Naive thymus-derived CD4-positive, alpha-beta T cell (primary cell): ENCODE measurements at regions of chr4 and their contacts with region 1.

Region 1: DNA sequence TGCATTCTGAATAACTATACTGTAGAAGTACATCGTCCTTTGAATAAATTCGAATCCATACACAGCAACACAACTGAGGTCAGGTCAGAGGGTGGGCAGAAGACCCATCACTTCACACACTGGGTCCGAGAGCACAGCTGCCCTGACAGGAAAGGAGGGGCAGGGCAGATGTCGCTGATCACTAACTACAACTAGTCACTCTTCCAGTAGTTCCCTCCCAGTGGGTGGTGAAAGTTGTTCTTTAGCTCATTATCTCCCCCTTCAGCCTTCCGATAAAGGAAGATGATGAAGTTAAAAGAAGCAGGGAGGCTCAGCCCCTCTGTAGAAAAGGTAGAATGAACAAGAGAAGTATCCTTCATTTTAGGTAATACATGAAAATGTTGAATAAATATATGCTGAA is 278.9 kb downstream of the INPP4B start:
- DNase-seq: peak; percentile 7 to 75 (median 67)
- ATAC-seq: peak; percentile 82
- H3K4me3 ChIP-seq: peak overlapping the region; percentile 59
- H3K4me3 Mint-ChIP-seq: peak overlapping the region; percentile 82 to 98 (median 93)
- H3K27ac ChIP-seq: peak overlapping the region; percentile 84
- H3K27ac Mint-ChIP-seq: peak overlapping the region; percentile 92 to 99 (median 96)
- H3K4me1 ChIP-seq: peaks cover 10 to 45% of the 10 kb centered on the region in 2 donors
- H3K4me1 Mint-ChIP-seq: peaks cover 5 to 80% (median 66%) of the 10 kb centered on the region in 7 donors
- H3K27me3 ChIP-seq: no peaks in the 10 kb centered on the region
- H3K27me3 Mint-ChIP-seq: no peaks in the 10 kb centered on the region

Region 2: DNA sequence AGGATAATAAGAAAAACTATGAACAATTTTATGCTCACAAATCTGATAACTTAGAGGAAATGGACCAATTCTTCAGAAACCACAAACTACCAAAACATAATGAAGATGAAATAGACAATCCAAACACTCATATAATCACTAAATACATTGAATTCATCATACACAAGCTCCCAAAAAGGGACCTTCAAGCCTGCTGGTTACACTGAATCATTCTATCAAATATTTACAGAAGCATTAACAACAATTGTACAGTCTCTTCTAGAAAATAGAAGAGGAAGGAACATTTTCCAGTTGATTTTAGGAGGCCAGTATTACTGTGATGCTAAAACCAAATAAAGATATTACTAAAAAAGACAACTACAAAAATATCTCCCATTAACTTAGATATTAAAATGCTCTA is 842.6 kb before region 1 on chr4:
- CTCF ChIA-PET with region 1: no interaction called
- POLR2A ChIA-PET with region 1: no interaction called
- intact Hi-C with region 1: no loop called
- DNase-seq: no peak
- ATAC-seq: no peak
- H3K4me3 ChIP-seq: no peak overlapping the region
- H3K4me3 Mint-ChIP-seq: no peak overlapping the region
- H3K27ac ChIP-seq: no peak overlapping the region
- H3K27ac Mint-ChIP-seq: no peak overlapping the region
- H3K4me1 ChIP-seq: no peaks in the 10 kb centered on the region
- H3K4me1 Mint-ChIP-seq: peaks cover 0 to 3% (median 0%) of the 10 kb centered on the region in 7 donors
- H3K27me3 ChIP-seq: no peaks in the 10 kb centered on the region
- H3K27me3 Mint-ChIP-seq: no peaks in the 10 kb centered on the region

Region 3: DNA sequence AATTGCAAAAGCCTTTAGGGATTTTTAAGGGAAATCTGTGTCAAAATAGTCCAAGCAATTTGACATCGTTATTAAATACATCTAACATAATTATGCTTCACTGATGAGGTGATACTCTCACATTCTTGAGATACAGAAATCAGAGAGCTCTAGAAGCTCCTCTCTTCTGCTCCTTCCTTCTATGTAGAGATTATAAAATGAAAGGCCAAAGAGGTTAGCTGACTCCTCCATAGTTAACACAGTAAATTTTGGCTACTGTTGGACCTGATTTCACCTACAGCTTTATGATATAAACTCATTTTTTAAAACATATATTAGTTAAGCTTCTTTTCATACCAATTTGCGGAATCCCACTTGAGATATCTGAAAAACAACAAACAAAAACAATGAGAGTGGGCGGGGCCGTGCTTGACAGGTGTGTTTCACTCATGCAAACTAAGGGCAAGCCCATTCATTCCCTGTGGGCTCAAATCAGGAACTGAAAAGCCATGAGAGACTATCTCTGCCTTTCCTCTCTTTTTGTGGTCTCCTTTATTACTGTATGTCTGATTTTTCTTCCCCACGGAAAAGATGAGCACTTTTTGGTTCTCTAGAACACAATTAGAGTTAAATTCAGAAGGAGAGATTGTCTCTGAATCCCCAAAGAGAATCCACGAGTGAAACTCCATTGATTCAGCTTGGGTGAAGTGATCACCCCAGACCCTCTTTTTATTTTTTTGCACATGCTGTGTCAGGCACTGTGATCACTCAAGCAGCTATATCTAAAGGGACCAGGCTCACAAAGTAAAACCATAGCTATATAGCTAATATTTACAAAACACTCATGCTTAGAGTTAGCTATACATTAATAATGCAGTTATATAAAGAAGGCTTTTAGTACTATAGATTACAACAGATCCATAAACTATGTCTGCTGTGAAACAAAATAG is 364.5 kb before region 1 on chr4:
- CTCF ChIA-PET with region 1: no interaction called
- POLR2A ChIA-PET with region 1: no interaction called
- intact Hi-C with region 1: loop called in 1 of 2 experiments (anchors 5 kb)
- DNase-seq: no peak
- ATAC-seq: no peak
- H3K4me3 ChIP-seq: no peak overlapping the region
- H3K4me3 Mint-ChIP-seq: no peak overlapping the region
- H3K27ac ChIP-seq: no peak overlapping the region
- H3K27ac Mint-ChIP-seq: peak overlapping the region in 2 of 9 donors; percentile 27 to 61
- H3K4me1 ChIP-seq: no peaks in the 10 kb centered on the region
- H3K4me1 Mint-ChIP-seq: peaks cover 0 to 48% (median 32%) of the 10 kb centered on the region in 7 donors
- H3K27me3 ChIP-seq: no peaks in the 10 kb centered on the region
- H3K27me3 Mint-ChIP-seq: no peaks in the 10 kb centered on the region

Region 4: DNA sequence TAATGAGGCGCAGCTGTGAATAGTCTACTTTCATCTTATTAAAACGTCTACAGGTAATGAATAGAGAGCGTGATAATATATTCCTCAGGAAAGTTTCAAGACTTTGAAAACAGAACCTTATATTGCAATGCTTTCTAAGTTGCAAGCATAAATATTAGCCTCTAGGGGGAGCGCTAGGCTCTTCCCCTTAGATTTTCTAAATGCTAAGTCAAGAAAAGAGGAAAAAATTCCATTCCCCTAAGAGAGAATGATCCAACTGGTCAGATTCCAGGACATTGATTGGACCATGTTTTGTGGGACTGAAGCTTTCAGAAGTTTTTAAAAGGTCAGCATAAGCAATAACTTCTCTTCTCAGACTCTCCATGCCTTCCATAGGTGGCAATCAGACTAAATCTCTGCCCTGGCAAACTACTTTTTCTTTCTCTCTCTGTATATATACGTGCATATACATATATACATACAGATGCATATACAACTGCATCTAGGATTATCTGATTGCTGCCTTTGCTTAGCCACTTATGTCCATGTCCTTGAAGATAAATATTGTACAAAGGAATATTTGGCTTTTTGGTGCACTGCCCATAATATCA is 214.0 kb before region 1 on chr4:
- CTCF ChIA-PET with region 1: interaction called, 22 read pairs
- POLR2A ChIA-PET with region 1: interaction called, 50 read pairs
- intact Hi-C with region 1: loop called (anchors 1 kb)
- DNase-seq: peak in 6 of 9 donors; percentile 21 to 50 (median 46)
- ATAC-seq: peak; percentile 61
- H3K4me3 ChIP-seq: no peak overlapping the region
- H3K4me3 Mint-ChIP-seq: peak overlapping the region in 9 of 10 donors; percentile 38 to 79 (median 70)
- H3K27ac ChIP-seq: peak overlapping the region; percentile 67
- H3K27ac Mint-ChIP-seq: peak overlapping the region; percentile 68 to 95 (median 92)
- H3K4me1 ChIP-seq: peaks cover 69 to 84% of the 10 kb centered on the region in 2 donors
- H3K4me1 Mint-ChIP-seq: peaks cover 58 to 100% (median 97%) of the 10 kb centered on the region in 7 donors
- H3K27me3 ChIP-seq: no peaks in the 10 kb centered on the region
- H3K27me3 Mint-ChIP-seq: no peaks in the 10 kb centered on the region

Region 5: DNA sequence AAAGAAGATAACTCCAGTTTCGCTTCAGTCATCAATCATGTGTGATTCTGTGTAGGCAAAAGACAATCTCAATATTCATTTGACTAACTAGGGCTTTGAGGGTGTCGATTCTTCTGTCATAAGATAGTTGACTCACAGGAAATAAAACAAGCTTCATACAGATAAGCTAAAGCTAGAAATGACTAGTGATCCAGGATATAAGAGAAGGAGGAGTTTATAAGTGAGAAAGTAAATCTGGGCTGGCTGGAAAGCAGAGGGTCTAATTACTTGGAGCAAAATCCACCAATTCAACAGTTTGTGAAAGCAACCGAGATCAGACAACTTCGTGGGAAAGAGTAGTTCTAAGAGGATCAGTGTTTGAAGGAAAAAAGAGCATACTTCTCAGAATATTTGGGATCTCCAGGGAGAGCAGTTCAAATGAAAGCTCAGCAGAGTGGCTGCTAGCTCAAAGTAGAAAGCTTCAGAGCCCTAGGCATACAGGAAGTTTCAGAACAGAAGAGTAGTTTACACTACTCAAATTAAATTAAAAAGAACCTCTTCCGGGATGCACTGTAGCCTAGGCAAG is 150.4 kb before region 1 on chr4:
- CTCF ChIA-PET with region 1: no interaction called
- POLR2A ChIA-PET with region 1: interaction called, 5 read pairs
- intact Hi-C with region 1: loop called in 1 of 2 experiments (anchors 2 kb)
- DNase-seq: peak in 7 of 9 donors; percentile 18 to 64 (median 55)
- ATAC-seq: peak; percentile 90
- H3K4me3 ChIP-seq: peak overlapping the region; percentile 50
- H3K4me3 Mint-ChIP-seq: peak overlapping the region; percentile 22 to 90 (median 79)
- H3K27ac ChIP-seq: peak overlapping the region; percentile 64
- H3K27ac Mint-ChIP-seq: peak overlapping the region; percentile 77 to 98 (median 94)
- H3K4me1 ChIP-seq: peaks cover 25 to 37% of the 10 kb centered on the region in 2 donors
- H3K4me1 Mint-ChIP-seq: peaks cover 21 to 75% (median 60%) of the 10 kb centered on the region in 7 donors
- H3K27me3 ChIP-seq: no peaks in the 10 kb centered on the region
- H3K27me3 Mint-ChIP-seq: no peaks in the 10 kb centered on the region

Region 6: GRCh38 chr4:142585411-142585810 is 18.2 kb after region 1 on chr4:
- CTCF ChIA-PET with region 1: interaction called, 5 read pairs
- POLR2A ChIA-PET with region 1: interaction called, 3 read pairs
- intact Hi-C with region 1: loop called in 1 of 2 experiments (anchors 2 kb)
- DNase-seq: no peak
- ATAC-seq: no peak
- H3K4me3 ChIP-seq: no peak overlapping the region
- H3K4me3 Mint-ChIP-seq: peak overlapping the region in 1 of 10 donors; percentile 24
- H3K27ac ChIP-seq: no peak overlapping the region
- H3K27ac Mint-ChIP-seq: peak overlapping the region in 1 of 9 donors; percentile 23
- H3K4me1 ChIP-seq: peaks cover 0 to 3% of the 10 kb centered on the region in 2 donors
- H3K4me1 Mint-ChIP-seq: peaks cover 10 to 58% (median 38%) of the 10 kb centered on the region in 7 donors
- H3K27me3 ChIP-seq: no peaks in the 10 kb centered on the region
- H3K27me3 Mint-ChIP-seq: no peaks in the 10 kb centered on the region

Region 7: DNA sequence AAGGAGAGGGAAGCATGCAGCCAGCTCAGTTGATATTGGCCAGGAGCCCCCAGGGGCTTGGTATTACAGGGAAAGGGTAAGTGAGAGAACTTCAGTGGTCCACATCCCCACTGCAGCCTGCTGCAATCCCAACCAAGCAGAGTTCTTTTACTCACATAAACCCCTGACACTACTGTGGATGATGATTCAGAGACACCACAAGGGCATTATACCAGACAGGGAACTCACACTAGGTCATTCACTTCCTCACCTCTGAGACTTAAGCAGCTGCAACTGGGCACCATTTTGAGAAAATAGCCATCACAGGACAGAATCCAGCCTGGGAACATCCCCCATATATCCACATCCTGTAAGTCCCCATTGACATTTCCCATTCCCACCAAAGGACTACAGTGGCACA is 30.9 kb after region 1 on chr4:
- CTCF ChIA-PET with region 1: no interaction called
- POLR2A ChIA-PET with region 1: no interaction called
- intact Hi-C with region 1: no loop called
- DNase-seq: no peak
- ATAC-seq: no peak
- H3K4me3 ChIP-seq: no peak overlapping the region
- H3K4me3 Mint-ChIP-seq: no peak overlapping the region
- H3K27ac ChIP-seq: no peak overlapping the region
- H3K27ac Mint-ChIP-seq: peak overlapping the region in 3 of 9 donors; percentile 37 to 75 (median 54)
- H3K4me1 ChIP-seq: no peaks in the 10 kb centered on the region
- H3K4me1 Mint-ChIP-seq: peaks cover 3 to 27% (median 13%) of the 10 kb centered on the region in 7 donors
- H3K27me3 ChIP-seq: no peaks in the 10 kb centered on the region
- H3K27me3 Mint-ChIP-seq: no peaks in the 10 kb centered on the region

Region 8: DNA sequence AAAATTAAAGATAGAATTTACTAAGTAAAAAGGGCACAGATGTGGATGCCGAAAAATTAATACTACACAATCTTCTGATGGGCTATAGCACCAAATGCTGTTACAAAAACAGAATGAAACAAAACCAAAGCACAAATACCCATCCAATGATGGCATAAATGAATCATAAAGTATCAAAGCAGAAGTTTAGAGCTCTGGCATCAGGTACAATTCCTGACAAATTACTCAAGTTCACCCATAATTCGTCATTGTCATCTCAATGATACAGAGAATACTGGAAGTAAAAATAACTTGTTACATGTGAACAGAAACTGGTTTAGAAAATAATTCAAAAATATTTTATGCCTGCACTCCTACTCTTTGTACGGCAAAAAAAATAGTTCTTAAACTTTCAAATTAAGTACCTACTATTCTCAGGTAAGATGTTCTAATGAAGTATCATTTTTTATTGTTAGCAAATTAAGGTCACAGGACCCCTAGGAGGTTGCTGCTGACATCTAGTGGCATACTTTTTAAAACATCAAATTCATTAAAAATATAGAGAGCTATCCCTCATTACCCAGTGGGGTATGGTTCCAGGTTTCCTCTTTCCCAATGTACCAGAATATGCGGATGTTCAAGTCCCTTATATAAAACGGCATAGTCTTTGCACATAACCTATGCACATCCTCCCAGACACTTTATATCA is 152.8 kb after region 1 on chr4:
- CTCF ChIA-PET with region 1: interaction called, 9 read pairs
- POLR2A ChIA-PET with region 1: interaction called, 15 read pairs
- intact Hi-C with region 1: loop called (anchors 1 kb)
- DNase-seq: peak in 6 of 9 donors; percentile 22 to 64 (median 58)
- ATAC-seq: peak; percentile 75
- H3K4me3 ChIP-seq: no peak overlapping the region
- H3K4me3 Mint-ChIP-seq: peak overlapping the region in 6 of 10 donors; percentile 16 to 51 (median 37)
- H3K27ac ChIP-seq: peak overlapping the region; percentile 43
- H3K27ac Mint-ChIP-seq: peak overlapping the region in 6 of 9 donors; percentile 43 to 91 (median 68)
- H3K4me1 ChIP-seq: peaks cover 0 to 10% of the 10 kb centered on the region in 2 donors
- H3K4me1 Mint-ChIP-seq: peaks cover 3 to 49% (median 30%) of the 10 kb centered on the region in 7 donors
- H3K27me3 ChIP-seq: no peaks in the 10 kb centered on the region
- H3K27me3 Mint-ChIP-seq: no peaks in the 10 kb centered on the region

Region 9: GRCh38 chr4:143513306-143514168 is 946.3 kb after region 1 on chr4 and contains the start of gene SMARCA5:
- CTCF ChIA-PET with region 1: no interaction called
- POLR2A ChIA-PET with region 1: no interaction called
- intact Hi-C with region 1: loop called (anchors 5 kb)
- DNase-seq: peak; percentile 93 to 99 (median 98)
- ATAC-seq: peak; percentile 92
- H3K4me3 ChIP-seq: peak within 1 kb of the TSS; percentile 91
- H3K4me3 Mint-ChIP-seq: peak within 1 kb of the TSS; percentile 93 to 100 (median 98)
- H3K27ac ChIP-seq: peak within 1 kb of the TSS; percentile 98
- H3K27ac Mint-ChIP-seq: peak within 1 kb of the TSS; percentile 97 to 100 (median 100)
- H3K4me1 ChIP-seq: peaks cover 20 to 36% of the 10 kb centered on the region in 2 donors
- H3K4me1 Mint-ChIP-seq: peaks cover 22 to 54% (median 37%) of the 10 kb centered on the region in 7 donors
- H3K27me3 ChIP-seq: no peaks in the 10 kb centered on the region
- H3K27me3 Mint-ChIP-seq: peaks cover 0 to 30% (median 0%) of the 10 kb centered on the region in 5 donors
- total RNA-seq, gene SMARCA5: 48.3 to 58.2 (median 54.4) TPM